Prostate gland (tissue), 2 donors: ENCODE measurements at regions of chr3 and their contacts with region 1.

Region 1: GRCh38 chr3:17258823-17259436 is 374.2 kb downstream of the PLCL2 start:
- DNase-seq: no peak
- H3K4me3 ChIP-seq: no peak overlapping the region
- H3K27ac ChIP-seq: no peak overlapping the region
- H3K4me1 ChIP-seq: no peaks in the 10 kb centered on the region
- H3K27me3 ChIP-seq: no peaks in the 10 kb centered on the region
- CTCF ChIP-seq: peak; percentile 46 to 68 (median 64)
- POLR2A ChIP-seq: no peak

Region 2: DNA sequence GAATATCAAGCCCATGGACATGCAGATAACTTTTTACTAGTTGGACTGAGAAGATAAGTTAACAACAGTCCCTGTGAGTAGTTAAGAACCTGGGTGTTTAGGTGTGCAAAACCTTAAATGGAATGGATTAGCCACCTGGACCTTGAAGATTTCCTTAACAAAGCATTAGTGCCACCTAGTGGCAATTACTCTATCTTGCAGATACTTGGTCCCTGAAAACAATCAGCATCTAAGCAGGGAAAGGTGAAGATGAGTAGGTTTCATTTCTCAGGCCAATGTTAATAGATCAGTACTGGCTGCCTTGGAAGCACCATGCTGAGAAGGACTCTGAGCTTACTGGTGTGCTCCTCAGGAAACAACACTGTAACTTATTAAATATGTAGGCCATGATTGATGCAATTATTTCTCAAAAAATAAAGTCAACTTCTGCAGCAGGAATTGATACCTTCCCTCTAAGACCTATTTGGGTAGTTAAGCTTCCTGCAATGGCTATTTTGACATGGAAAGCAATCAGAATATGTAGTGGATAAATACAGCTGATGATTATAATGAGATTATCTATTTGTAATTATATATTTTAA is 154.1 kb after region 1 on chr3:
- intact Hi-C with region 1: loop called (anchors 5 kb)
- DNase-seq: peak; percentile 33
- H3K4me3 ChIP-seq: no peak overlapping the region
- H3K27ac ChIP-seq: no peak overlapping the region
- H3K4me1 ChIP-seq: no peaks in the 10 kb centered on the region
- H3K27me3 ChIP-seq: no peaks in the 10 kb centered on the region
- CTCF ChIP-seq: peak in 3 of 4 experiments; percentile 64 to 78 (median 68)
- POLR2A ChIP-seq: no peak